GM12878 (cell line): ENCODE measurements at regions of chr1 and their contacts with region 1.

Region 1: GRCh38 chr1:47262787-47263413 is 30.9 kb upstream of the TAL1 start:
- DNase-seq: no peak
- ATAC-seq: peak; percentile 81
- H3K4me3 ChIP-seq: no peak overlapping the region
- H3K27ac ChIP-seq: no peak overlapping the region
- H3K4me1 ChIP-seq: no peaks in the 10 kb centered on the region
- H3K27me3 ChIP-seq: no peaks in the 10 kb centered on the region
- CTCF ChIP-seq: peak; percentile 50 to 70 (median 59)
- EP300 ChIP-seq: no peak
- POLR2A ChIP-seq: no peak
- RAD21 ChIP-seq: peak; percentile 48

Region 2: DNA sequence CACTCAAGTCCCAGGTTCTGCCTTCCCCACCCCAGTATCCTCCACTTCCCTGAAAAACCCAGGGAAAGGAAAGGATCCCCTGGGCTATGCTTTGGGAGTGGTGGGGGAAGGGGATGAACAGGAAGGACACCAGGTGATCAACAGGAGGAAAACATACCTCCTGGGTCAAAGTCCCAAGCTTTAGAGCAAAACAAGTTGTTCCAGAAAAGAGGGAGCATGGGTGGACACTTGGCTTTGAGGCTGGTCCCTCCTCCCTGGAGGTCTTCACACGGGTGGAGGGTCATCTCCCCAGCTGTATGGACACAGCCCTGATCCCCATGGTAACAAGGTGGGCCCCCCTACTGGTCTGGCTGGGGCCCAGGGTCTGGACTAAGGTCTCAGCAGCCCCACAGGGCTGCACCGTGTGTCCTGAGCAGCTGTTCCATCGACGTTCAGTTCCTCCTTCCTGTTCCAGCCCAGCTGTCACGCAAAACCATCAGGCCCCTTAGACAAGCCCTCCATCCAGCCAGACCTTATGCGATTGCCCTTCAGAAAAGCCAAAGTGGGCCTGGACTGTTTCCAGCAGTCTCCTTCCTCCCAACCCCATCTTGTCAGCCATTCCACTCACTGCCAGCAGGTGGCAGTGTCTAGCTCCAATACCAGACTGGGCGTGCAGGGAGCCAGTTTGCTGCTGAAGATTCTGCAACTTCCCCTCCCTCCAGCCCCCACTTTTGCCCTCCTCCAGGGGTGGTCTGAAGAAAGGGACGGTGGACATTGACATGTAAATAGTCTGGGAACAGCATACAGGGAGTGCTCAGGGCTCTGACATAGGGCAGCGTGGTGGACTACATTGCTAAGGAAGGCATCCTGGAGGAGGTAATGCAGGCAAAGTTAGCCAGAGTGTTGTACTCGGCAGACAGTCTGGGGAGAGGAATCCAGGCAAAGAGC is 70.2 kb before region 1 on chr1:
- CTCF ChIA-PET with region 1: interaction called, 62 read pairs
- POLR2A ChIA-PET with region 1: no interaction called
- RAD21 ChIA-PET with region 1: interaction called, 22 read pairs
- SMC1A ChIA-PET with region 1: interaction called, 13 read pairs
- in situ Hi-C with region 1: no loop called
- intact Hi-C with region 1: loop called (anchors 2 kb)
- DNase-seq: no peak
- ATAC-seq: peak; percentile 94
- H3K4me3 ChIP-seq: no peak overlapping the region
- H3K27ac ChIP-seq: no peak overlapping the region
- H3K4me1 ChIP-seq: no peaks in the 10 kb centered on the region
- H3K27me3 ChIP-seq: peaks cover 0 to 5% of the 10 kb centered on the region in 2 experiments; a peak in 1 of 4 replicates
- CTCF ChIP-seq: peak; percentile 86 to 96 (median 95)
- EP300 ChIP-seq: no peak
- POLR2A ChIP-seq: no peak
- RAD21 ChIP-seq: peak; percentile 80

Region 3: DNA sequence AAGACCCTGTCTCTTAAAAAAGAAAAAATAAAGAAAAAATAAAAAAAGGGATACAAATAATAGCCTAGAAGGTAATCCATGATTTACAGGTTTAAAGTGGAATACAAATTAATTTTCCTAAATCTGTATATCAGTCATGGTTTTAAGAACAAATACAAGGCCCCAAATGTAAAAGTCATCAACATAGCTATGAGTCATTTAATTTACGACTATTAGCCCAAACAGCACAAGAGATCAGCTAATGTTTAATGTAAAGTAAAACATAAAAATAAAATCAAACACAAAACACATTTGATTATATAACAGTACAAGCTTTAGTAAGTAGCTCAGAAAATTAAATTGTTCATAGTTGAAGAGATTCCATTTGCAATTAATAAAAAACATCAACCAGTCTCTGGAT is 10.5 kb before region 1 on chr1:
- CTCF ChIA-PET with region 1: interaction called, 26 read pairs
- POLR2A ChIA-PET with region 1: no interaction called
- RAD21 ChIA-PET with region 1: no interaction called
- SMC1A ChIA-PET with region 1: interaction called, 20 read pairs
- in situ Hi-C with region 1: no loop called
- intact Hi-C with region 1: no loop called
- DNase-seq: no peak
- ATAC-seq: no peak
- H3K4me3 ChIP-seq: no peak overlapping the region
- H3K27ac ChIP-seq: no peak overlapping the region
- H3K4me1 ChIP-seq: no peaks in the 10 kb centered on the region
- H3K27me3 ChIP-seq: no peaks in the 10 kb centered on the region
- CTCF ChIP-seq: no peak
- EP300 ChIP-seq: no peak
- POLR2A ChIP-seq: no peak
- RAD21 ChIP-seq: no peak

Region 4: DNA sequence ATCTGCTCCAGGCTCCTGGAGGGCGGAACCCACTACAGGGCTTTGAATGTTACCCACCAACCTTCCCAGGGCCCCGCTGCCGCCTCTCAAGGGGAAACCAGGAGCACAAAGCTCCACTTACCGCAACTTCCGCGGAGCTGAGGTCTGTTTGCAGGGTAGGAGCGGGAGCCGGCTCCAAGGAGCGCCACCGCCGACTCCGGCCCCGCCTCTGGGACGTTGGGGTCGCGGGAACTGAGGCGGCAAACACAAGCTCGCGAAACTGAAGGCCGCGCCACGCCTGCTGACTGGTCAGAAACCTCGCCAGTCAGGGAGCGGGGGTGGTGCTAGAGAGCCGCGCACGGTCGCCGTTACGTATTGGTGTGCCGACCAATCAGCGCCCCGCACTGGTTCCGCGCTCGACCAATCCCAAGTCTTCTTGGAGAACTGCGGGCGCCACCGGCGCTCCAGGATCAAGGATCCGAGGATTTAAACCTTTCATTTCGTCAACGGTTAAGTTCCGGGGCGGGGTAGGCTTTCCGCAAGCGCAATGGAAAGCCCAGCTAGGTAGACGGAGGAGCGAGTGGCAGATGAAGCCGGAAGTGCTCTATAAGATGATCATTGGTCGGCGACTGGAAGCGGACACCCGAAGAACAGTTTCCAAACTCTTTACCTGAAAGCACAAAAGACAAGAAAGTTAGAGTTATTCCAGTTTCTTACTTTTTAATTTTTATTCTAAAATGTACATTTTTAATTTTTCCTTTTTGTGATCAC is 51.2 kb after region 1 on chr1 and contains the start of gene STIL:
- CTCF ChIA-PET with region 1: interaction called, 11 read pairs
- POLR2A ChIA-PET with region 1: interaction called, 6 read pairs
- RAD21 ChIA-PET with region 1: interaction called, 6 read pairs
- SMC1A ChIA-PET with region 1: interaction called, 10 read pairs
- in situ Hi-C with region 1: no loop called
- intact Hi-C with region 1: no loop called
- DNase-seq: peak; percentile 96
- ATAC-seq: peak; percentile 99
- H3K4me3 ChIP-seq: peak within 1 kb of the TSS; percentile 86
- H3K27ac ChIP-seq: peak within 1 kb of the TSS; percentile 94
- H3K4me1 ChIP-seq: no peaks in the 10 kb centered on the region
- H3K27me3 ChIP-seq: no peaks in the 10 kb centered on the region
- CTCF ChIP-seq: no peak
- EP300 ChIP-seq: peak in 1 of 2 experiments; percentile 39; a peak in 1 of 4 replicates
- POLR2A ChIP-seq: peak; percentile 89
- RAD21 ChIP-seq: no peak
- polyA plus RNA-seq, gene STIL: 6.0 to 6.3 TPM

Region 5: GRCh38 chr1:47323599-47324031 is 60.7 kb after region 1 on chr1:
- CTCF ChIA-PET with region 1: interaction called, 10 read pairs
- POLR2A ChIA-PET with region 1: no interaction called
- RAD21 ChIA-PET with region 1: interaction called, 3 read pairs
- SMC1A ChIA-PET with region 1: interaction called, 3 read pairs
- in situ Hi-C with region 1: no loop called
- intact Hi-C with region 1: no loop called
- DNase-seq: no peak
- ATAC-seq: no peak
- H3K4me3 ChIP-seq: no peak overlapping the region
- H3K27ac ChIP-seq: no peak overlapping the region
- H3K4me1 ChIP-seq: no peaks in the 10 kb centered on the region
- H3K27me3 ChIP-seq: no peaks in the 10 kb centered on the region
- CTCF ChIP-seq: no peak
- EP300 ChIP-seq: no peak
- POLR2A ChIP-seq: no peak
- RAD21 ChIP-seq: no peak

Region 6: GRCh38 chr1:47638713-47639112 is 375.8 kb after region 1 on chr1:
- CTCF ChIA-PET with region 1: no interaction called
- POLR2A ChIA-PET with region 1: interaction called, 10 read pairs
- RAD21 ChIA-PET with region 1: no interaction called
- SMC1A ChIA-PET with region 1: no interaction called
- in situ Hi-C with region 1: no loop called
- intact Hi-C with region 1: no loop called
- DNase-seq: no peak
- ATAC-seq: no peak
- H3K4me3 ChIP-seq: no peak overlapping the region
- H3K27ac ChIP-seq: no peak overlapping the region
- H3K4me1 ChIP-seq: no peaks in the 10 kb centered on the region
- H3K27me3 ChIP-seq: no peaks in the 10 kb centered on the region; a peak in 2 of 4 replicates
- CTCF ChIP-seq: no peak
- EP300 ChIP-seq: no peak
- POLR2A ChIP-seq: no peak
- RAD21 ChIP-seq: no peak